Naive thymus-derived CD4-positive, alpha-beta T cell (primary cell): ENCODE measurements at regions of chr2 and their contacts with region 1.

Region 1: GRCh38 chr2:229780856-229781773 is 66.8 kb upstream of the DNER start:
- DNase-seq: peak in 6 of 9 donors; percentile 8 to 49 (median 38)
- ATAC-seq: peak; percentile 90
- H3K4me3 ChIP-seq: no peak overlapping the region
- H3K4me3 Mint-ChIP-seq: no peak overlapping the region
- H3K27ac ChIP-seq: no peak overlapping the region
- H3K27ac Mint-ChIP-seq: peak overlapping the region in 7 of 9 donors; percentile 2 to 59 (median 16)
- H3K4me1 ChIP-seq: peaks cover 2 to 4% of the 10 kb centered on the region in 2 donors
- H3K4me1 Mint-ChIP-seq: peaks cover 13 to 30% (median 25%) of the 10 kb centered on the region in 7 donors
- H3K27me3 ChIP-seq: no peaks in the 10 kb centered on the region
- H3K27me3 Mint-ChIP-seq: no peaks in the 10 kb centered on the region

Region 2: DNA sequence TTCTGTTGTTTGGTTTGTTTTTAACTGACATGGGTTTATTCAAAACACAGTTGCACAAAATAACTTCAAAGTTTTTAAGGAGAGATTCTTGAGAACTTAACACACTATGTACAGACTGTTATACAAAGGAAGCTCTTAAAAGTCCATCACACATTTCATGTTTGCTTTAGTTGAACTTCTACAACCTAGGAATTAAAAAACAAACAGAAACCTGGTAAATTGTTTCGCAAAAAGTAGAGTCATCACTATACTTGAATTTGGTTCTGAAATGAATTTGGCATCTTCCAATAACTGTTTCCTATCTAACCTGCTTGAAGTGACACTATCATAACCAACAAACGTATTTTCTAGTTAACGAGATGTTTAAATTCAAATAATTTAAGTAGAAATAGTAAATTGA is 118.9 kb after region 1 on chr2:
- CTCF ChIA-PET with region 1: no interaction called
- POLR2A ChIA-PET with region 1: no interaction called
- intact Hi-C with region 1: no loop called
- DNase-seq: no peak
- ATAC-seq: no peak
- H3K4me3 ChIP-seq: no peak overlapping the region
- H3K4me3 Mint-ChIP-seq: peak overlapping the region in 2 of 10 donors; percentile 4 to 30
- H3K27ac ChIP-seq: no peak overlapping the region
- H3K27ac Mint-ChIP-seq: peak overlapping the region in 2 of 9 donors; percentile 45 to 66
- H3K4me1 ChIP-seq: peaks cover 3 to 27% of the 10 kb centered on the region in 2 donors
- H3K4me1 Mint-ChIP-seq: peaks cover 33 to 86% (median 78%) of the 10 kb centered on the region in 7 donors
- H3K27me3 ChIP-seq: no peaks in the 10 kb centered on the region
- H3K27me3 Mint-ChIP-seq: no peaks in the 10 kb centered on the region

Region 3: GRCh38 chr2:229910832-229911412 is 129.8 kb after region 1 on chr2:
- CTCF ChIA-PET with region 1: interaction called, 6 read pairs
- POLR2A ChIA-PET with region 1: no interaction called
- intact Hi-C with region 1: loop called in 1 of 2 experiments (anchors 5 kb)
- DNase-seq: peak in 6 of 9 donors; percentile 10 to 36 (median 28)
- ATAC-seq: peak; percentile 79
- H3K4me3 ChIP-seq: no peak overlapping the region
- H3K4me3 Mint-ChIP-seq: peak overlapping the region in 7 of 10 donors; percentile 8 to 65 (median 14)
- H3K27ac ChIP-seq: peak overlapping the region; percentile 12
- H3K27ac Mint-ChIP-seq: peak overlapping the region; percentile 5 to 84 (median 56)
- H3K4me1 ChIP-seq: peaks cover 13 to 31% of the 10 kb centered on the region in 2 donors
- H3K4me1 Mint-ChIP-seq: peaks cover 35 to 68% (median 59%) of the 10 kb centered on the region in 7 donors
- H3K27me3 ChIP-seq: no peaks in the 10 kb centered on the region
- H3K27me3 Mint-ChIP-seq: no peaks in the 10 kb centered on the region

Region 4: GRCh38 chr2:230068016-230068650 is 287.0 kb after region 1 on chr2:
- CTCF ChIA-PET with region 1: interaction called, 3 read pairs
- POLR2A ChIA-PET with region 1: no interaction called
- intact Hi-C with region 1: loop called in 1 of 2 experiments (anchors 2 kb)
- DNase-seq: peak; percentile 16 to 62 (median 38)
- ATAC-seq: peak; percentile 40
- H3K4me3 ChIP-seq: peak overlapping the region; percentile 62
- H3K4me3 Mint-ChIP-seq: peak overlapping the region; percentile 81 to 96 (median 90)
- H3K27ac ChIP-seq: no peak overlapping the region
- H3K27ac Mint-ChIP-seq: peak overlapping the region in 3 of 9 donors; percentile 69 to 80 (median 74)
- H3K4me1 ChIP-seq: peaks cover 0 to 7% of the 10 kb centered on the region in 2 donors
- H3K4me1 Mint-ChIP-seq: peaks cover 8 to 18% (median 12%) of the 10 kb centered on the region in 7 donors
- H3K27me3 ChIP-seq: no peaks in the 10 kb centered on the region
- H3K27me3 Mint-ChIP-seq: peaks cover 4 to 32% (median 5%) of the 10 kb centered on the region in 5 donors

Region 5: GRCh38 chr2:230160112-230160660 is 379.1 kb after region 1 on chr2:
- CTCF ChIA-PET with region 1: no interaction called
- POLR2A ChIA-PET with region 1: no interaction called
- intact Hi-C with region 1: loop called (anchors 1 to 10 kb)
- DNase-seq: peak; percentile 15 to 60 (median 52)
- ATAC-seq: peak; percentile 82
- H3K4me3 ChIP-seq: no peak overlapping the region
- H3K4me3 Mint-ChIP-seq: peak overlapping the region in 7 of 10 donors; percentile 35 to 68 (median 44)
- H3K27ac ChIP-seq: no peak overlapping the region
- H3K27ac Mint-ChIP-seq: peak overlapping the region in 2 of 9 donors; percentile 33 to 34
- H3K4me1 ChIP-seq: no peaks in the 10 kb centered on the region
- H3K4me1 Mint-ChIP-seq: peaks cover 6 to 11% (median 6%) of the 10 kb centered on the region in 7 donors
- H3K27me3 ChIP-seq: no peaks in the 10 kb centered on the region
- H3K27me3 Mint-ChIP-seq: no peaks in the 10 kb centered on the region

Region 6: DNA sequence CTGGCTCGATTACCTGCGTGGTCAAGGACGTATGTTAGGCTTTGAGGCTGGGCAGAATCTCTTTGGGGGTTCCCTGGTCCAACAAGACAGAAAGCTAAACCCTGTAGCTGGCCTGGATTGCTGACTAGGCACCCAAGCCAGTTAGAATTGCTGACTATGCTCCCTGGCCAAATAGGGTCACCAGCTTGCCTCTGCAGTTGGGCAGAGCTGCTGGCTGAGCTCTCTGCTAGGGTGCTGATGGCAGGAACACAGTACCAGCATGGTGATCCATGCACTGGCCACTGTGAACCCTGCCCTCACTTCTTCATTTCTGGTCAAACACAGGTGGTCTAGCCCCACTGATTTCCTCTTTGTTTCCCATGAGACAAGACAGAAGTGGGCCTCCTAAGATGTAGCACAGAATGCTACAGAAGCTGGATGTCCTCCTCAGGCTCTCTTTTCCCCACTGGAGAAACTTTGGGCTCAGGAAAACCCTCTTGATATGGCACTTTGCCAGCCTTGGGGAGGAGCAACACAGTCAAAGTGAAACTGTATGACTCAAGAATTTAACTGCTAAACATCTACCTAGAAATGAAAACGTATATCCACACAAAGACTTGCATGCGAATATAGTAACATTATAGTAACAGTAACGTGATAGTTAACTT is 566.7 kb after region 1 on chr2:
- CTCF ChIA-PET with region 1: no interaction called
- POLR2A ChIA-PET with region 1: no interaction called
- intact Hi-C with region 1: no loop called
- DNase-seq: peak in 1 of 9 donors; percentile 37
- ATAC-seq: no peak
- H3K4me3 ChIP-seq: no peak overlapping the region
- H3K4me3 Mint-ChIP-seq: peak overlapping the region; percentile 21 to 77 (median 62)
- H3K27ac ChIP-seq: no peak overlapping the region
- H3K27ac Mint-ChIP-seq: peak overlapping the region in 8 of 9 donors; percentile 20 to 95 (median 78)
- H3K4me1 ChIP-seq: peaks cover 12 to 29% of the 10 kb centered on the region in 2 donors
- H3K4me1 Mint-ChIP-seq: peaks cover 34 to 84% (median 77%) of the 10 kb centered on the region in 7 donors
- H3K27me3 ChIP-seq: no peaks in the 10 kb centered on the region
- H3K27me3 Mint-ChIP-seq: no peaks in the 10 kb centered on the region